ENCODE measurements at regions of chr15 and their contacts with region 1.

Region 1: GRCh38 chr15:28975766-28976179 is 90.0 kb downstream of the APBA2 start:
- DNase-seq: peak; percentile 39
- ATAC-seq: peak; percentile 78
- H3K4me3 ChIP-seq: no peak overlapping the region
- H3K27ac ChIP-seq: no peak overlapping the region
- H3K4me1 ChIP-seq: peaks cover 0 to 14% of the 10 kb centered on the region in 2 experiments; a peak in 3 of 4 replicates
- H3K27me3 ChIP-seq: peaks cover 10% of the 10 kb centered on the region; the same call in 1 of the 2 replicates
- CTCF ChIP-seq: peak; percentile 54 to 94 (median 90); a peak in 5 of 6 replicates
- POLR2A ChIP-seq: no peak
- RAD21 ChIP-seq: peak; percentile 62

Region 2: GRCh38 chr15:28929200-28929599 is 46.6 kb before region 1 on chr15:
- CTCF ChIA-PET with region 1: no interaction called
- POLR2A ChIA-PET with region 1: no interaction called
- RAD21 ChIA-PET with region 1: no interaction called
- intact Hi-C with region 1: loop called (anchors 5 kb)
- DNase-seq: no peak
- ATAC-seq: no peak
- H3K4me3 ChIP-seq: no peak overlapping the region
- H3K27ac ChIP-seq: no peak overlapping the region
- H3K4me1 ChIP-seq: no peaks in the 10 kb centered on the region
- H3K27me3 ChIP-seq: peaks cover 17% of the 10 kb centered on the region
- CTCF ChIP-seq: no peak
- POLR2A ChIP-seq: no peak
- RAD21 ChIP-seq: no peak

Region 3: DNA sequence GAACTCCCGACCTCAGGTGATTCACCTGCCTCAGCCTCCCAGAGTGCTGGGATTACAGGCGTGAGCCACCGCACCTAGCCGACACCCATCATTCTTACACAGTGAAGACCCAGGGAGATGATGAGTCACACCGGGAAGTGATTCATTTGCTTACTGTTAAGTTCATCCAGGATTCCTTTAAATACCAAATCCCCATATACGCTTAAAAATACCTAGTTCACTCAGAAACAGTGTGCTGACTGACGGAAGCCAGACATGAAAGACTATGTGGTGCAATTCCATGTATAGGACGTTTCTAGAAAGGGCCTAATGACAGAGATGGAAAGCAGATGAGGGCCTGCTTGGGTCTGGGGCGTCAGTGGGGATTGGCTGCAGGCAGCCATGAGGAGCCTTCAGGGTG is 14.8 kb before region 1 on chr15:
- CTCF ChIA-PET with region 1: interaction called, 3 read pairs
- POLR2A ChIA-PET with region 1: no interaction called
- RAD21 ChIA-PET with region 1: no interaction called
- intact Hi-C with region 1: loop called (anchors 2 kb)
- DNase-seq: peak; percentile 81
- ATAC-seq: peak; percentile 95
- H3K4me3 ChIP-seq: no peak overlapping the region
- H3K27ac ChIP-seq: peak overlapping the region; percentile 30; the same call in 1 of the 2 replicates
- H3K4me1 ChIP-seq: peaks cover 6 to 17% of the 10 kb centered on the region in 2 experiments
- H3K27me3 ChIP-seq: no peaks in the 10 kb centered on the region
- CTCF ChIP-seq: no peak
- POLR2A ChIP-seq: no peak
- RAD21 ChIP-seq: no peak

Region 4: GRCh38 chr15:29538044-29538443 is 562.3 kb after region 1 on chr15:
- CTCF ChIA-PET with region 1: no interaction called
- POLR2A ChIA-PET with region 1: no interaction called
- RAD21 ChIA-PET with region 1: no interaction called
- intact Hi-C with region 1: no loop called
- DNase-seq: no peak
- ATAC-seq: no peak
- H3K4me3 ChIP-seq: no peak overlapping the region
- H3K27ac ChIP-seq: no peak overlapping the region
- H3K4me1 ChIP-seq: no peaks in the 10 kb centered on the region
- H3K27me3 ChIP-seq: peaks cover 39% of the 10 kb centered on the region
- CTCF ChIP-seq: no peak
- POLR2A ChIP-seq: no peak
- RAD21 ChIP-seq: no peak